ENCODE measurements at regions of chr22 and their contacts with region 1.

Region 1: GRCh38 chr22:37428649-37429586 is 1.6 kb upstream of the ELFN2 start:
- DNase-seq: peak; percentile 81
- ATAC-seq: peak; percentile 63
- H3K4me3 Mint-ChIP-seq: peak overlapping the region; percentile 47
- H3K27ac Mint-ChIP-seq: no peak overlapping the region
- H3K4me1 Mint-ChIP-seq: peaks cover 14% of the 10 kb centered on the region
- H3K27me3 Mint-ChIP-seq: peaks cover 50% of the 10 kb centered on the region
- CTCF ChIP-seq: peak; percentile 68

Region 2: GRCh38 chr22:37253126-37253660 is 175.7 kb before region 1 on chr22:
- CTCF ChIA-PET with region 1: no interaction called
- POLR2A ChIA-PET with region 1: no interaction called
- DNase-seq: no peak
- ATAC-seq: peak; percentile 48; the same call in 1 of the 2 replicates
- H3K4me3 Mint-ChIP-seq: no peak overlapping the region
- H3K27ac Mint-ChIP-seq: no peak overlapping the region
- H3K4me1 Mint-ChIP-seq: peaks cover 14% of the 10 kb centered on the region
- H3K27me3 Mint-ChIP-seq: no peaks in the 10 kb centered on the region; the same call in 1 of the 2 replicates
- CTCF ChIP-seq: no peak

Region 3: GRCh38 chr22:37316875-37317371 is 112.0 kb before region 1 on chr22:
- CTCF ChIA-PET with region 1: interaction called, 69 read pairs
- POLR2A ChIA-PET with region 1: interaction called, 3 read pairs
- DNase-seq: peak; percentile 80
- ATAC-seq: peak; percentile 86
- H3K4me3 Mint-ChIP-seq: no peak overlapping the region
- H3K27ac Mint-ChIP-seq: no peak overlapping the region
- H3K4me1 Mint-ChIP-seq: peaks cover 11% of the 10 kb centered on the region
- H3K27me3 Mint-ChIP-seq: no peaks in the 10 kb centered on the region; the same call in 1 of the 2 replicates
- CTCF ChIP-seq: peak; percentile 88

Region 4: GRCh38 chr22:37330200-37331033 is 98.5 kb before region 1 on chr22:
- CTCF ChIA-PET with region 1: interaction called, 22 read pairs
- POLR2A ChIA-PET with region 1: no interaction called
- DNase-seq: peak; percentile 91
- ATAC-seq: peak; percentile 84
- H3K4me3 Mint-ChIP-seq: no peak overlapping the region
- H3K27ac Mint-ChIP-seq: no peak overlapping the region
- H3K4me1 Mint-ChIP-seq: peaks cover 29% of the 10 kb centered on the region
- H3K27me3 Mint-ChIP-seq: peaks cover 43% of the 10 kb centered on the region
- CTCF ChIP-seq: no peak

Region 5: GRCh38 chr22:37340331-37341262 is 88.3 kb before region 1 on chr22:
- CTCF ChIA-PET with region 1: interaction called, 22 read pairs
- POLR2A ChIA-PET with region 1: no interaction called
- DNase-seq: no peak
- ATAC-seq: peak; percentile 60
- H3K4me3 Mint-ChIP-seq: peak overlapping the region; percentile 35
- H3K27ac Mint-ChIP-seq: no peak overlapping the region
- H3K4me1 Mint-ChIP-seq: peaks cover 38% of the 10 kb centered on the region
- H3K27me3 Mint-ChIP-seq: peaks cover 18% of the 10 kb centered on the region
- CTCF ChIP-seq: no peak

Region 6: DNA sequence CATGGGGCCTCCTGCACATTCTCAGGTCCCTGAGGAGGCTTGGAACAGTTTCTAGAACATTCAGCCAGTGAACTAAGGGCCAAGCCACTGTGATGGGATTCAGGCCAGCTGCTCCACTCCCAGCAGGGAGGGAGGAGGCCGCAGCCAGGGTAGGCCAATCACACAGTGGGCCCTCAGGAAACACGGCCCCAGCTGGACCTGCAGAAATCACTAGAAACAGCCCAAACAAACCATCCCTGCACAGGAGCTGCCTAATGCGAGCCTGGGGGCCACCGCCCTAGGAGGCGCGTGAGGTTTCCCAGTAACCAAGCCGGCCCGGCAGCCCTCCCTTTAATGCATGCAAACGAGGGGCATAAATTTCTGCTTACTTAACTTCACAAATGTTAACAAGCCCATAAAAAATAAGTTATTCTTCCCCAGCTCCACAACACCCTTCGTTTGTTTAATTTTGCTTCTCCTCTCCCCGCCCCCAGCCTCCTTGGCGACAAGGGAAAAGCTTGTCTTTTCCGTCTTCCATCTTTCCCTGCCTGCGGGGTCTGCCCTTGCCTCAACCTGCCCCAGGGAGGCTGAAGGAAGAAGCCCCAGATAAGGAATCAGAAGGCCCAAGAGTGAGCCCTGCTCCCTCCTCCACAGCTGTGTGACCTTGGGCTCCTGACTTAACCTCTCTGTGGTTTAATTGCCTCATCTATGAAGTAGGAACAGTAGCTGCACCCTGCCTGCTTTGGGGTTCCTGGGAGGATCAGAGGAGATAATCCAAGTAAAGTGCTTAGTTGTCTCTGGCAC is 27.3 kb before region 1 on chr22:
- CTCF ChIA-PET with region 1: interaction called, 10 read pairs
- POLR2A ChIA-PET with region 1: interaction called, 3 read pairs
- DNase-seq: no peak
- ATAC-seq: no peak
- H3K4me3 Mint-ChIP-seq: no peak overlapping the region
- H3K27ac Mint-ChIP-seq: no peak overlapping the region
- H3K4me1 Mint-ChIP-seq: peaks cover 22% of the 10 kb centered on the region
- H3K27me3 Mint-ChIP-seq: no peaks in the 10 kb centered on the region
- CTCF ChIP-seq: no peak

Region 7: GRCh38 chr22:37439347-37439746 is 10.4 kb after region 1 on chr22:
- CTCF ChIA-PET with region 1: interaction called, 10 read pairs
- POLR2A ChIA-PET with region 1: no interaction called
- DNase-seq: no peak
- ATAC-seq: no peak
- H3K4me3 Mint-ChIP-seq: no peak overlapping the region
- H3K27ac Mint-ChIP-seq: no peak overlapping the region
- H3K4me1 Mint-ChIP-seq: no peaks in the 10 kb centered on the region
- H3K27me3 Mint-ChIP-seq: peaks cover 9% of the 10 kb centered on the region
- CTCF ChIP-seq: no peak

Region 8: DNA sequence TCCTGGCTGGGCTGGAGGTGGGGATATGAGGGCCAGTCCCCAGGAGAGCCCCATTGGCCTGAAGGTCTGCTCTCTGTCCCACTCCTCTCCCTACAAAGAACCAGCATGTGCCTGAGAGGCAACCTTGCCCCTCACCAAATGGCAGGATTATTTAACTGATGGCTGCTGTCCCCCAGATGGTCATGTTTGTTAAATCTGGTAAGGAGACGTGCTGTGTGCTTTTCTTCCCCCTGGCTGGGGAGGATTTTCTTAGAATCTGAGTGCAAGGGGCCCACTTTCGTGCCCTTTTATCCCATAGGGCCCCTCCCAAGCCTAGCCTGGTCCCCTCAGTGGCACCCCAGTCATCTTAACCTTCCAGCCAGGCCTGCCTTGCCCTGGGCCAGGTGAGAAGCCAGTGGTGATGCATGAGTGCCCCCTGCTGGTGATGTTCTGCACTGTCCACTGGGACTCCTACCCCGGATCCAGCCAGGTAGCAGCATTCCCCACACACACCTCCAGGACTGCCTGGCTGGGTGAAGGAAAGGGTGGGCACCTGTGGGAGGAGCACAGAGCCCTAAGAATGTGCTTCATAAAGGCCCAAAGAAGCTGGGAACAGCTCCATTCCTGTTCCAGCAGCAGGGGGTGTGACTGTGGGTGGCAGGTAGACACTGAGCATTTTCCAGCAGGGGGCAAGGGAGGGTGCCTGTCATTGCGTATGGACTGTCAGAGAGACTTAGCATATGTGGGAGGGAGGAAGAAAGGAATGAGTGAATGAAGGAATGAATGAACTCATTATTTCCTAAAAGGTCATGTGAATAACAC is 28.4 kb after region 1 on chr22:
- CTCF ChIA-PET with region 1: interaction called, 10 read pairs
- POLR2A ChIA-PET with region 1: no interaction called
- DNase-seq: peak; percentile 94
- ATAC-seq: peak; percentile 98
- H3K4me3 Mint-ChIP-seq: no peak overlapping the region
- H3K27ac Mint-ChIP-seq: no peak overlapping the region
- H3K4me1 Mint-ChIP-seq: peaks cover 2% of the 10 kb centered on the region; the same call in 1 of the 2 replicates
- H3K27me3 Mint-ChIP-seq: no peaks in the 10 kb centered on the region
- CTCF ChIP-seq: peak; percentile 96

Region 9: GRCh38 chr22:37633625-37634416 is 204.9 kb after region 1 on chr22:
- CTCF ChIA-PET with region 1: no interaction called
- POLR2A ChIA-PET with region 1: no interaction called
- DNase-seq: peak; percentile 68
- ATAC-seq: peak; percentile 72
- H3K4me3 Mint-ChIP-seq: peak overlapping the region; percentile 33
- H3K27ac Mint-ChIP-seq: peak overlapping the region; percentile 53; the same call in 1 of the 2 replicates
- H3K4me1 Mint-ChIP-seq: peaks cover 21% of the 10 kb centered on the region
- H3K27me3 Mint-ChIP-seq: no peaks in the 10 kb centered on the region
- CTCF ChIP-seq: no peak